ENCODE measurements at regions of chr1 and their contacts with region 1.

Region 1: GRCh38 chr1:32335790-32336590 is at the start of gene MARCKSL1:
- DNase-seq: no peak
- ATAC-seq: peak; percentile 51
- H3K4me3 ChIP-seq: peak within 1 kb of the TSS; percentile 80
- H3K27ac ChIP-seq: peak within 1 kb of the TSS; percentile 81
- H3K4me1 ChIP-seq: peaks cover 57% of the 10 kb centered on the region
- H3K27me3 ChIP-seq: no peaks in the 10 kb centered on the region
- CTCF ChIP-seq: no peak
- EP300 ChIP-seq: no peak
- POLR2A ChIP-seq: peak; percentile 96
- RAD21 ChIP-seq: no peak
- polyA plus RNA-seq, gene MARCKSL1: 14.5 to 32.6 TPM

Region 2: DNA sequence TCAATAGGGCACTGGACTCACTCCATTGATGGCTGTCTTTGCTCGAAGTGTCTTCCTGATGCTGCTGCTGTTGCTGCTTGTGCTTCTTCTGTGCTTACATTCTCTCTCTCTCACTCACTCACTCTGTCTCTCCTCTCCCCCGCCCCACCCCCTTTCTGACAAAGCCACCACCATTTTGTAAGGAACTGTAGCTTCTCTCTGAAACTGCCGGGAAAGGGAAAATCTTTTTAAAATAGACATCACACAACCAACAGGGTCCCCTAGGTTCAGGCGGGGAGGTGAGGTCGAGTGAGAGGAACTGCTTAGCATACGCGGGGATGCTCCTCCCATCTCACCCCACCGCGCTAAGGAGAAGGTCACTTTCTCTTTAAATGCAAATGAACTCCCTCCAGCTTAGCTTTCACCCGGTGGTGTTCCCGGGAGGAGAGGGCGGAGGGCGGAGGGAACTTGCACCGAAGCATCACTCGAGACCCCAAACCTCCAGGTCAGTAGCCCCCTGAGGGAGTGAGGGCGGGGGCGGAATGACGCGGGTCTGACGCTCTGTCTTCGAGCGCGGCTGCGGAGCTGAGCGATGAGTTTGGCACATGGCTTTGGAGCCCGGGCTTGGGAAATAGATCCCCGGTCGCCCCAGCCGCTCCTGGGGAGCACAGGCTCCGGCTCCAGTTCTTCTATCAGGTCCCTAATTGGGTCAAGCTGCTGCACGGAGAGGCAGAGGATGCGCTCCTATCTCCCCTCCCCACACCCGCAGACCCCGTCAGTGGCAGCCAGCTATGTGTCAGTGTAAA is 135.6 kb before region 1 on chr1 and contains the start of gene CCDC28B:
- CTCF ChIA-PET with region 1: interaction called, 6 read pairs
- POLR2A ChIA-PET with region 1: interaction called, 13 read pairs
- RAD21 ChIA-PET with region 1: interaction called, 3 read pairs
- SMC1A ChIA-PET with region 1: interaction called, 3 read pairs
- in situ Hi-C with region 1: no loop called
- intact Hi-C with region 1: no loop called
- DNase-seq: peak; percentile 34
- ATAC-seq: peak; percentile 66
- H3K4me3 ChIP-seq: peak within 1 kb of the TSS; percentile 90
- H3K27ac ChIP-seq: peak within 1 kb of the TSS; percentile 89
- H3K4me1 ChIP-seq: peaks cover 16% of the 10 kb centered on the region
- H3K27me3 ChIP-seq: no peaks in the 10 kb centered on the region
- CTCF ChIP-seq: no peak
- EP300 ChIP-seq: peak in 1 of 2 experiments; percentile 20; a peak in 1 of 4 replicates
- POLR2A ChIP-seq: peak; percentile 63; the same call in 1 of the 2 replicates
- RAD21 ChIP-seq: no peak
- polyA plus RNA-seq, gene CCDC28B: 10.5 to 29.8 TPM

Region 3: GRCh38 chr1:32247983-32248889 is 87.8 kb before region 1 on chr1:
- CTCF ChIA-PET with region 1: interaction called, 8 read pairs
- POLR2A ChIA-PET with region 1: interaction called, 17 read pairs
- RAD21 ChIA-PET with region 1: interaction called, 30 read pairs
- SMC1A ChIA-PET with region 1: interaction called, 3 read pairs
- in situ Hi-C with region 1: no loop called
- intact Hi-C with region 1: no loop called
- DNase-seq: no peak
- ATAC-seq: peak; percentile 69
- H3K4me3 ChIP-seq: peak overlapping the region; percentile 10; the same call in 1 of the 2 replicates
- H3K27ac ChIP-seq: peak overlapping the region; percentile 89
- H3K4me1 ChIP-seq: peaks cover 52% of the 10 kb centered on the region
- H3K27me3 ChIP-seq: no peaks in the 10 kb centered on the region
- CTCF ChIP-seq: peak; percentile 89 to 99 (median 96)
- EP300 ChIP-seq: no peak
- POLR2A ChIP-seq: peak; percentile 31; the same call in 1 of the 2 replicates
- RAD21 ChIP-seq: peak; percentile 64

Region 4: GRCh38 chr1:32266921-32267591 is 68.9 kb before region 1 on chr1:
- CTCF ChIA-PET with region 1: no interaction called
- POLR2A ChIA-PET with region 1: no interaction called
- RAD21 ChIA-PET with region 1: no interaction called
- SMC1A ChIA-PET with region 1: no interaction called
- in situ Hi-C with region 1: no loop called
- intact Hi-C with region 1: no loop called
- DNase-seq: no peak
- ATAC-seq: no peak
- H3K4me3 ChIP-seq: no peak overlapping the region
- H3K27ac ChIP-seq: peak overlapping the region; percentile 33; the same call in 1 of the 2 replicates
- H3K4me1 ChIP-seq: peaks cover 27% of the 10 kb centered on the region
- H3K27me3 ChIP-seq: no peaks in the 10 kb centered on the region
- CTCF ChIP-seq: no peak
- EP300 ChIP-seq: no peak
- POLR2A ChIP-seq: no peak
- RAD21 ChIP-seq: no peak

Region 5: DNA sequence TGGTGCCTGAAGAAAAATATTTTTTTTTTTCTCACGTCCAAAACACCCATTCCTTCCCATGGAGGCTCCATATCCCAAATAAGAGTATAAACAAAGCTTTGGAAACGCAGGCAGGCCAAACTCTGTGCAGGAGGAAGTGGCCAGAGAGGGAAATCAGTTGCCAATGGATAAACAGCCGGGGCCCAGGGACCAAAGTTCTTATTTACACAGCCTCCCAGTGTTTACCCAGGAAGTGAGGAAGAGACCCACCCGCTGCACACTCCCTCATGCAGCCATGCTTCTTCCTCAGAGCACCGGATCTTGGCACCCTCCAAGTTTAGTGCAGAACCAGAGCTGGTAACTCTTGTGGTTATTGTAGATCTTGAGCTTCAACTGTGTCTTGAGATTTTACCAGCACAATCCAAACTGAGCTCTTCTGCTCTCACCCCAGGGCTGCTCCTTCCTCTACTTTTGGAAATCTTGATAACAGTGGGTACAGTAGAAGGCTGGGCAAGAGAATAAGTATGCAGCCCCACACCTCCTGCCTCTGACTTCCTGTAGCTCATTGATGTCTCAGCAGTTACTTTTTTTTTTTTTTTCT is 14.2 kb before region 1 on chr1:
- CTCF ChIA-PET with region 1: interaction called, 20 read pairs
- POLR2A ChIA-PET with region 1: interaction called, 11 read pairs
- RAD21 ChIA-PET with region 1: interaction called, 15 read pairs
- SMC1A ChIA-PET with region 1: interaction called, 17 read pairs
- in situ Hi-C with region 1: no loop called
- intact Hi-C with region 1: no loop called
- DNase-seq: no peak
- ATAC-seq: peak; percentile 9; the same call in 1 of the 3 replicates
- H3K4me3 ChIP-seq: no peak overlapping the region
- H3K27ac ChIP-seq: peak overlapping the region; percentile 69
- H3K4me1 ChIP-seq: peaks cover 54% of the 10 kb centered on the region
- H3K27me3 ChIP-seq: no peaks in the 10 kb centered on the region
- CTCF ChIP-seq: no peak
- EP300 ChIP-seq: no peak
- POLR2A ChIP-seq: no peak
- RAD21 ChIP-seq: no peak

Region 6: DNA sequence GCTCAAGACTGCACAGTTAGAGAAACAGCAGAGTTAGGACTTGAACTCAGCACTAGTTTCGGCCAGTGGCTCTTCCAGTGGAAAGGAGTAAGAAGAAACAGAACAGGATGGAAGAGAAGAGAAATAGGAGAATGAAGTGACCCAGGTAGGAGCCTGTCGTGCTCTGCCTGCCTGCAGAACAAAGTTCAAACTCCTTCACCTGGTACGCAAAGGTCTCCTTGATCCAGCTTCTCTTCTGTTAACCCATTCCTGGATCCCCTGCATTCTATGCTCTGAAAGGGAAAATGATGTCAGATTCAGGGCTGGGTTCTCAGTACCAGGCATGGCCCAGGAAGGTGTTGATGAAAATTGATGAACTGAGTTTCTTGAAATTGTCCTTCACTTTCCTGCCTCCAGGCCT is 22.4 kb after region 1 on chr1:
- CTCF ChIA-PET with region 1: interaction called, 4 read pairs
- POLR2A ChIA-PET with region 1: interaction called, 46 read pairs
- RAD21 ChIA-PET with region 1: interaction called, 13 read pairs
- SMC1A ChIA-PET with region 1: interaction called, 16 read pairs
- in situ Hi-C with region 1: no loop called
- intact Hi-C with region 1: no loop called
- DNase-seq: no peak
- ATAC-seq: no peak
- H3K4me3 ChIP-seq: no peak overlapping the region
- H3K27ac ChIP-seq: no peak overlapping the region
- H3K4me1 ChIP-seq: peaks cover 8% of the 10 kb centered on the region
- H3K27me3 ChIP-seq: no peaks in the 10 kb centered on the region
- CTCF ChIP-seq: no peak
- EP300 ChIP-seq: no peak
- POLR2A ChIP-seq: no peak
- RAD21 ChIP-seq: no peak

Region 7: GRCh38 chr1:32394141-32394889 is 58.3 kb after region 1 on chr1 and contains the start of gene BSDC1:
- CTCF ChIA-PET with region 1: interaction called, 17 read pairs
- POLR2A ChIA-PET with region 1: interaction called, 22 read pairs
- RAD21 ChIA-PET with region 1: interaction called, 14 read pairs
- SMC1A ChIA-PET with region 1: interaction called, 15 read pairs
- in situ Hi-C with region 1: no loop called
- intact Hi-C with region 1: loop called (anchors 2 kb)
- DNase-seq: peak; percentile 94
- ATAC-seq: peak; percentile 97
- H3K4me3 ChIP-seq: peak within 1 kb of the TSS; percentile 78
- H3K27ac ChIP-seq: peak within 1 kb of the TSS; percentile 76
- H3K4me1 ChIP-seq: no peaks in the 10 kb centered on the region; the same call in 1 of the 2 replicates
- H3K27me3 ChIP-seq: no peaks in the 10 kb centered on the region
- CTCF ChIP-seq: no peak
- EP300 ChIP-seq: 0 out of 4 replicates have a peak, but pooled peaks of 1 of the 2 experiments have one; percentile 26
- POLR2A ChIP-seq: peak; percentile 93
- RAD21 ChIP-seq: no peak
- polyA plus RNA-seq, gene BSDC1: 3.0 to 4.9 TPM